GM23248 (cell line): ENCODE measurements at regions of chr17 and their contacts with region 1.

Region 1: DNA sequence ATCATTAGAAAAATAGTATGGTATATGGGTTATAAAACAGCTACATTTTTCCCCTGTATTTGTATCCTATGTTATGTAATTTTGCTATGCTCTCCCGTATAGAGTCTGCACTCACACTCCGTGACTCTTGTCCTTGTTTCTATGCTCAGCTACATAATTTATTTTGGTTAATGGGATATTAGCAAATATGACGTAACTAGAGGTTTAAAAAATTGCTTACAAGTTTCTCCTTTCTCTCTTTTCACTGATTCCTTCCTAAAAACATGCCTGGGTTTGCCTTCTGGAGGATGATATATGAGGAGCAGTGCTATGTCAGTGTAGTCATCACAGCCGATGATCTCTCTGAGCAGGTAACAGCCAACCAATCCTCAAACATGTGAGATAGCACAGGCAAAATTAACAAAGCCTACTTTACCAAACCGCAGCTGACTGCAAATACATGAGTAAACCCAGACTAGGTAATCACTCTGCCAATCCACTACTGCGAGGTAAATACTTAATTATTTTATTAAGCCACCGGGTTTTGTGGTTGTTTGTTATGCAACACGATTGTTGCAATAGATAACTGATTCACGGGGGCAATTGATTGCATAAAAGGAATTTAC is 126.9 kb downstream of the KIF2B start:
- DNase-seq: no peak
- H3K4me3 ChIP-seq: no peak overlapping the region
- H3K27ac ChIP-seq: no peak overlapping the region
- H3K4me1 ChIP-seq: no peaks in the 10 kb centered on the region
- H3K27me3 ChIP-seq: no peaks in the 10 kb centered on the region

Region 2: GRCh38 chr17:53894591-53894990 is 55.0 kb before region 1 on chr17:
- in situ Hi-C with region 1: loop called (anchors 10 kb)
- DNase-seq: no peak
- H3K4me3 ChIP-seq: no peak overlapping the region
- H3K27ac ChIP-seq: no peak overlapping the region
- H3K4me1 ChIP-seq: no peaks in the 10 kb centered on the region
- H3K27me3 ChIP-seq: no peaks in the 10 kb centered on the region

Region 3: DNA sequence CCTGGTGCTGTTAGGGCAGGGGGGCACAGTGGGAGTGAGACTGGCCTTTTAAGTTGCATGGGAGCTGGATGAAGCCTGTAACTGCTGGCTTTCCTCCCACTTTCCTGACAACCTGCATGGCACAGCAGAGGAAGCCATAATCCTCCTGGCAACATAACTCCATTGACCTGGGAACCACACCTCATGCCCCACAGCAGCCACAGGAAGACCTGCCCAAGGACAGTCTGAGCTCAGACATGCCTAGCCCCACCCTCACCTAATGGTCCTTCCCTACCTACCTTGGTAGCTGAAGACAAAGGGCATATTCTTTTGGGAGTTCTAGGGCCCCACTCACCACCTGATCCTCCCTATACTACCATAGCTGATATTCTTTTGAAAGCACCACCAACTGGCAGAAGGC is 468.9 kb after region 1 on chr17:
- in situ Hi-C with region 1: no loop called
- DNase-seq: no peak
- H3K4me3 ChIP-seq: no peak overlapping the region
- H3K27ac ChIP-seq: no peak overlapping the region
- H3K4me1 ChIP-seq: no peaks in the 10 kb centered on the region
- H3K27me3 ChIP-seq: no peaks in the 10 kb centered on the region